Lower leg skin (tissue), 4 donors: ENCODE measurements at regions of chr13 and their contacts with region 1.

Region 1: GRCh38 chr13:103140001-103140671 is 73.9 kb upstream of the SLC10A2 start:
- DNase-seq: no peak
- H3K4me3 ChIP-seq: no peak overlapping the region
- CTCF ChIP-seq: no peak
- POLR2A ChIP-seq: no peak

Region 2: GRCh38 chr13:102913914-102914313 is 226.2 kb before region 1 on chr13:
- intact Hi-C with region 1: loop called (anchors 10 kb)
- DNase-seq: peak in 1 of 2 donors; percentile 49
- H3K4me3 ChIP-seq: no peak overlapping the region
- CTCF ChIP-seq: no peak
- POLR2A ChIP-seq: no peak

Region 3: GRCh38 chr13:103328899-103329298 is 188.8 kb after region 1 on chr13:
- intact Hi-C with region 1: no loop called
- DNase-seq: no peak
- H3K4me3 ChIP-seq: no peak overlapping the region
- CTCF ChIP-seq: no peak
- POLR2A ChIP-seq: no peak